Caco-2 (cell line): ENCODE measurements at regions of chr9 and their contacts with region 1.

Region 1: GRCh38 chr9:121322037-121322775 is 47.8 kb downstream of the STOM start:
- DNase-seq: peak in 1 of 2 experiments; percentile 52
- H3K4me3 ChIP-seq: no peak overlapping the region
- H3K4me3 Mint-ChIP-seq: no peak overlapping the region
- H3K27ac Mint-ChIP-seq: peak overlapping the region; percentile 43
- H3K4me1 ChIP-seq: peaks cover 20% of the 10 kb centered on the region; the same call in 1 of the 2 replicates
- H3K4me1 Mint-ChIP-seq: peaks cover 11% of the 10 kb centered on the region
- H3K27me3 ChIP-seq: no peaks in the 10 kb centered on the region
- H3K27me3 Mint-ChIP-seq: no peaks in the 10 kb centered on the region
- CTCF ChIP-seq: no peak

Region 2: DNA sequence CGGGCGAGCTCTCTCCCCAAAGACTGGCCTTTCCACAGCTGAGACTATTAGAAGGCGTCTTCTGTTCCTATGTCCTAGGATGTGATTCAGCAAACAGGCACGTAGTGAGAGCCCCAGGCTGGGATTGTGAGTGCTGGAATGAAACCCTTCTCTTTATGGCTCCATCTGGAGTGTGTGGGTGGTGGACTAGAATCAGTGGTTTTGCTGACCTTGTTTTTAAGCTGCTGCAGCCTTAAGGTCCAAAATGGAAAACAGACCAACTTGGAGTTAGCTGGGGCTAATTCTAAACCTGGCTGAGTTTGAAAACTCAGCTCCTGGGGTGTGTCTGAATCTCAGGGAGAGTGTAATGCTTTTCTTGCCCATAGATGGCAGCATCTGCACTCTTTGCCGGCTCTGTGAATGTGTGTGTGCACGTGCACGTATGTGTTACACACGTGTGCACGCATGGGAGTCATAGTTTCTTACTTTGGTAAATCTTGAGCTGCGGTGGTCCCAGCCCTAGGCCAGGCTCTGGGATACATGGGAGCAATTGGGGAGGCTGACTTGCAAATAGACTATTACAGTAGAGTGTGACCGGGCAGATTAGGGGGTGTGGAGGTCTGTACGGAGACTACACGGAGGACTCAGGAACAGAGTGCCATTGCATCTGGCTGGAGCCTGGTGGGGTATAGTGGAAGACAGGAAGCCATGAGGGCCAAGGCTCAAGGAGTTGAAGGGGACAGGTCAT is 43.5 kb before region 1 on chr9:
- CTCF ChIA-PET with region 1: interaction called, 13 read pairs
- POLR2A ChIA-PET with region 1: no interaction called
- intact Hi-C with region 1: loop called (anchors 1 kb)
- DNase-seq: peak; percentile 70 to 72
- H3K4me3 ChIP-seq: no peak overlapping the region
- H3K4me3 Mint-ChIP-seq: peak overlapping the region; percentile 50
- H3K27ac Mint-ChIP-seq: peak overlapping the region; percentile 79
- H3K4me1 ChIP-seq: peaks cover 34% of the 10 kb centered on the region
- H3K4me1 Mint-ChIP-seq: peaks cover 37% of the 10 kb centered on the region
- H3K27me3 ChIP-seq: no peaks in the 10 kb centered on the region
- H3K27me3 Mint-ChIP-seq: no peaks in the 10 kb centered on the region
- CTCF ChIP-seq: peak; percentile 84 to 88

Region 3: GRCh38 chr9:121286973-121287741 is 35.0 kb before region 1 on chr9:
- CTCF ChIA-PET with region 1: interaction called, 23 read pairs
- POLR2A ChIA-PET with region 1: interaction called, 3 read pairs
- intact Hi-C with region 1: loop called (anchors 1 kb)
- DNase-seq: peak; percentile 88 to 96
- H3K4me3 ChIP-seq: no peak overlapping the region
- H3K4me3 Mint-ChIP-seq: peak overlapping the region; percentile 62
- H3K27ac Mint-ChIP-seq: peak overlapping the region; percentile 99
- H3K4me1 ChIP-seq: peaks cover 53% of the 10 kb centered on the region
- H3K4me1 Mint-ChIP-seq: peaks cover 56% of the 10 kb centered on the region
- H3K27me3 ChIP-seq: no peaks in the 10 kb centered on the region
- H3K27me3 Mint-ChIP-seq: no peaks in the 10 kb centered on the region
- CTCF ChIP-seq: peak; percentile 28 to 53

Region 4: GRCh38 chr9:121367301-121368137 is 45.3 kb after region 1 on chr9:
- CTCF ChIA-PET with region 1: interaction called, 7 read pairs
- POLR2A ChIA-PET with region 1: no interaction called
- intact Hi-C with region 1: loop called (anchors 1 kb)
- DNase-seq: no peak
- H3K4me3 ChIP-seq: no peak overlapping the region
- H3K4me3 Mint-ChIP-seq: peak overlapping the region; percentile 70
- H3K27ac Mint-ChIP-seq: peak overlapping the region; percentile 77
- H3K4me1 ChIP-seq: peaks cover 58% of the 10 kb centered on the region
- H3K4me1 Mint-ChIP-seq: peaks cover 27% of the 10 kb centered on the region
- H3K27me3 ChIP-seq: no peaks in the 10 kb centered on the region
- H3K27me3 Mint-ChIP-seq: no peaks in the 10 kb centered on the region
- CTCF ChIP-seq: no peak

Region 5: GRCh38 chr9:121376214-121376830 is 54.1 kb after region 1 on chr9:
- CTCF ChIA-PET with region 1: interaction called, 9 read pairs
- POLR2A ChIA-PET with region 1: no interaction called
- intact Hi-C with region 1: loop called (anchors 1 kb)
- DNase-seq: no peak
- H3K4me3 ChIP-seq: no peak overlapping the region
- H3K4me3 Mint-ChIP-seq: no peak overlapping the region
- H3K27ac Mint-ChIP-seq: no peak overlapping the region
- H3K4me1 ChIP-seq: peaks cover 36% of the 10 kb centered on the region
- H3K4me1 Mint-ChIP-seq: peaks cover 30% of the 10 kb centered on the region
- H3K27me3 ChIP-seq: no peaks in the 10 kb centered on the region
- H3K27me3 Mint-ChIP-seq: no peaks in the 10 kb centered on the region
- CTCF ChIP-seq: peak in 1 of 2 experiments; percentile 28

Region 6: GRCh38 chr9:121399883-121400607 is 77.8 kb after region 1 on chr9:
- CTCF ChIA-PET with region 1: interaction called, 20 read pairs
- POLR2A ChIA-PET with region 1: no interaction called
- intact Hi-C with region 1: loop called (anchors 1 kb)
- DNase-seq: peak in 1 of 2 experiments; percentile 54
- H3K4me3 ChIP-seq: no peak overlapping the region
- H3K4me3 Mint-ChIP-seq: no peak overlapping the region
- H3K27ac Mint-ChIP-seq: no peak overlapping the region
- H3K4me1 ChIP-seq: no peaks in the 10 kb centered on the region
- H3K4me1 Mint-ChIP-seq: no peaks in the 10 kb centered on the region
- H3K27me3 ChIP-seq: no peaks in the 10 kb centered on the region
- H3K27me3 Mint-ChIP-seq: no peaks in the 10 kb centered on the region
- CTCF ChIP-seq: peak; percentile 29 to 36

Region 7: DNA sequence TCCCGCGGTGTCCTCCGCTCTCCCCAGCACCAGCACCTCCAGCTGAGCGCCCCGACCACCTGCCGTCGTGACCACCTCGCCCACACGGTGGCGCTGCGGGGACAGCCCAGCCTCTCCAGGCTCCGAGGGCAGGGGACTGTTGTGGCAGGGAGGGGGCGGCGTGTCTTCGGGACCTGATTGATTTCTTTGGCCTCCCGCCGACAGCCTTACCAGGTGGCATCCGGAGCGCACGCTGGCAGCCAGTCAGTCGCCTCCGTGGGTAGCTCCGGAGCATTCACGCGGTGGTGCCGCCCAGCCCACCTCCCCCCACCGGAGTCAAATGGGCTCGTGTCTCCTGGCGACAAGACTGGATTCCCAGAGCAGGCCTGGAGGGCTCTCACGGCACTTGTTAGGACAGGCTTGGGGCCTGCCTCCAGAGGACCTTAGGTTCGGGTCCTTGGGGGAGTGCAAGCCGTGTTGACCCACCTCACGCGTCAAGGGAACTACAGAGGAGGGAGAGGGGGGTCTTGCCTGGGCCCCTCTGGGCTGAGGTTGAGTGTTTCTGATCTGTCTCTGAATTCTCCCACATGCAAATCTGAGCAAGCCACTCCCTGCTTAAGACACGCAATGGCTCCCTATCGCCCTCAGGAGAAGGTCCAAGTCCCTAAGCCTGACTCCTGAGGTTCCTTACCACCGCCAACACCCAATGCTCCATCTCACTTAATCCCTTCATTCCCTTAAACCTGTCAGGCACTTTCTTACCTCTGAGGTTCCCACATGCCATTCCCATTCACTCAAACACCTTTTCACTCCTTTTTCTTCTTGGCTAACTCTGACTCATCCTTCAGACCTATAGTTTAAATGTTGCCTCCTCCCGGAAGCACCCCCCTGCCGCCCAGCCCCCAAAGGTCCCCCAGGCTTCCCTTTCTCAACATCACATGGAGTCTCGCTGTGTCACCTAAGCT is 228.6 kb after region 1 on chr9:
- CTCF ChIA-PET with region 1: no interaction called
- POLR2A ChIA-PET with region 1: no interaction called
- intact Hi-C with region 1: no loop called
- DNase-seq: peak; percentile 86 to 92
- H3K4me3 ChIP-seq: peak overlapping the region; percentile 39
- H3K4me3 Mint-ChIP-seq: peak overlapping the region; percentile 49
- H3K27ac Mint-ChIP-seq: no peak overlapping the region
- H3K4me1 ChIP-seq: no peaks in the 10 kb centered on the region
- H3K4me1 Mint-ChIP-seq: no peaks in the 10 kb centered on the region
- H3K27me3 ChIP-seq: no peaks in the 10 kb centered on the region
- H3K27me3 Mint-ChIP-seq: no peaks in the 10 kb centered on the region
- CTCF ChIP-seq: peak; percentile 92 to 93